Activated CD8-positive, alpha-beta memory T cell treated with anti-CD3 and anti-CD28 coated beads, Interleukin-2, amount 10 ng/mL, durations not matched to agents 7 days and 5 days (primary cell): ENCODE measurements at regions of chr16 and their contacts with region 1.

Region 1: GRCh38 chr16:1825864-1826690 is 548 bp downstream of the HAGH start:
- DNase-seq: peak; percentile 78
- ATAC-seq: peak; percentile 72
- H3K4me3 Mint-ChIP-seq: peak overlapping the region; percentile 79
- H3K27ac Mint-ChIP-seq: peak overlapping the region; percentile 47
- H3K4me1 Mint-ChIP-seq: peaks cover 43% of the 10 kb centered on the region
- H3K27me3 Mint-ChIP-seq: no peaks in the 10 kb centered on the region

Region 2: GRCh38 chr16:1782352-1783091 is 43.6 kb before region 1 on chr16 and contains the starts of genes NUBP2 and SPSB3:
- CTCF ChIA-PET with region 1: interaction called, 11 read pairs
- DNase-seq: peak; percentile 100
- ATAC-seq: peak; percentile 91
- H3K4me3 Mint-ChIP-seq: peak within 1 kb of the TSS; percentile 93
- H3K27ac Mint-ChIP-seq: peak within 1 kb of the TSS; percentile 88
- H3K4me1 Mint-ChIP-seq: peaks cover 24% of the 10 kb centered on the region
- H3K27me3 Mint-ChIP-seq: no peaks in the 10 kb centered on the region
- total RNA-seq, gene NUBP2: 52.5 to 64.0 TPM
- total RNA-seq, gene SPSB3: 35.7 to 36.5 TPM

Region 3: GRCh38 chr16:1807626-1808025 is 18.5 kb before region 1 on chr16:
- CTCF ChIA-PET with region 1: no interaction called
- DNase-seq: no peak
- ATAC-seq: no peak
- H3K4me3 Mint-ChIP-seq: no peak overlapping the region
- H3K27ac Mint-ChIP-seq: no peak overlapping the region
- H3K4me1 Mint-ChIP-seq: no peaks in the 10 kb centered on the region
- H3K27me3 Mint-ChIP-seq: no peaks in the 10 kb centered on the region

Region 4: DNA sequence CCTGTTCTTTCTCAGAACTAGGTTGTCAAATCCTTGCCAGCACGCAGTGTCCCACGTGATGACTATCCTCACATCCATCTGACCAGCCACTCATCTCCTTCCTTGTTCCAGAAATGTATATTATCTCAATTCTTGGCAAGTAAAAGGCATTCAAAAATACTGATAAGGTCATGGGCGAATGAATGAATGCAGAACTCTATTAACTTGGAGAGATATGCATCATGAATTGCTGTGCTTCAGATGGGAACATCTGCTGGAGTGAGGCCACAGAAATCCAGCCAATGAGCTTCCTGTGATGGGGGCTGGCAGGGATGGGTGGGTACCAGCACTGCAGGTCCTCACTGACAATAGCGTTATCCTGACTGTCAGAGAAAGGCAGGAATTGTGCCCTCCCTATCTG is 19.9 kb after region 1 on chr16:
- CTCF ChIA-PET with region 1: no interaction called
- DNase-seq: no peak
- ATAC-seq: no peak
- H3K4me3 Mint-ChIP-seq: no peak overlapping the region
- H3K27ac Mint-ChIP-seq: no peak overlapping the region
- H3K4me1 Mint-ChIP-seq: no peaks in the 10 kb centered on the region
- H3K27me3 Mint-ChIP-seq: peaks cover 13% of the 10 kb centered on the region

Region 5: DNA sequence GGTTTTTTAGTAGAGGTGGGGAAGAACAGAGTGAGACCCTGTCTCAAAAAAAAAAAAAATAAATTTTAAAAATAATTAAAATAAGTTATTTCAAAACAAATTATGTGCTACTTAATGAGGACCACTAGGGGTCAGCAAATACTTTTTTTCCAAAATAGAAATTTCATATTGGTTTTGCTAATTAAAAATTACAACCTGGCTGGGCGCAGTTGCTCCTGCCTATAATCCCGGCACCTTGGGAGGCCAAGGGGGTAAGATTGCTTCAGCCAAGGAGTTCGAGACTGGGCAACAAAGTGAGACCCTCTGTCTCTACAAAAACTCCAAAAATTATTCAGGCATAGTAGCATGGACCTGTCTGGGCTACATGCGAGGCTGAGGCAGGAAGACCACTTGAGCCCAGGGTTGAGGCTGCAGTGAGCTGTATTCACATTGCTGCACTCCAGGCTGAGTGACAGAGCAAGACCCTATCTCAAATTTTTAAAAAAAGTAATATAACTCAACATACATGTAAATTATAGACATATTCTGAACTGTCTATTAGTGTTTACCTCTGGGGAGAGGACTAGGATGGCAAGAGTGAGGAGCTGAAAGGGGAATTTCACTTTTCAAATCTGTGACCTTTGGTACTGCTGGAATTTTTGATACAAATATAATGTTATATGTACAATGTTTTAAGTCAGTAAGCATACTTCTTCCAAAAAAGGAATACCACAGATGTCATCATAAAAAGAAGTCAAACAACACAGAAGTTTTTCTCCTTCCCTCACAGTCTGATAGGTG is 37.8 kb after region 1 on chr16:
- CTCF ChIA-PET with region 1: no interaction called
- DNase-seq: no peak
- ATAC-seq: peak; percentile 27
- H3K4me3 Mint-ChIP-seq: no peak overlapping the region
- H3K27ac Mint-ChIP-seq: no peak overlapping the region
- H3K4me1 Mint-ChIP-seq: peaks cover 4% of the 10 kb centered on the region
- H3K27me3 Mint-ChIP-seq: peaks cover 41% of the 10 kb centered on the region